ENCODE measurements at regions of chr11 and their contacts with region 1.

Region 1: DNA sequence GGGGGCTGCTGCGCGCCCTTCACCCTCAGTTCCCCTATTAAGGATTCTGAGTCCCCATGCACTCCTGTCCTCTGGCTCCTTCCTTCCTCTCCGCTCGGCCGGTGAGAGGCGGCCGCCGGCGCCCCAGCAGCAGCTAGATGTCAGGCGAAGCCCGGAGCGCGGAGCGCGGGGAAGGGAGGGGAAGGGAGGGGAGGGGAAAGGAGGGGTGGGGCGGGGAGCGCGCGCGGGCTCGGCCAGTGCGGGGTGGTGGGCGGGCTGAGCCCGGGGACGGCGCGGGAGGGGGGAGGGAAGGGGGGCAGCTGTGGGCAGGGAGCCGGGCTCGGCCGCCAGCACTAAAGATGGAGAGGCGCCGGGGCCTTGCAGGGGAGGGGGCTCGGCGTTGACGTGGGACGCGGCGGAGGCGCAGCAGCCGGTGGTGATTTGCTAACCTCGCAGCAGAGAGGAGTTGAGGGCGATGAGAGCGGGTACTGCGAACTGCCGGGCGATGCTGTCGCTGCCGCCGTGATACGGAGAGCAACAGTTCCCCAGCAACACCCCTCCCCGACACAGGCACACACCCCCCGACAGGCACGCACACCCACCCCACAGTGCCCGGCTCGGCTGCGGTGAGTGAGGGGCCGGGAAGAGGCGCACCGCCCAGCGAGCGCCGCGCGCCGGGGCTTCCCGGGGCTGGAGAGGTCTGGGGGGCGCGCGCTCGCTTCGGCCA is at the start of gene ZBTB16:
- DNase-seq: peak; percentile 34 to 84 (median 56)
- ATAC-seq: peak; percentile 73
- H3K4me3 ChIP-seq: peak within 1 kb of the TSS; percentile 67
- H3K4me3 Mint-ChIP-seq: peak within 1 kb of the TSS; percentile 95
- H3K27ac ChIP-seq: peak within 1 kb of the TSS in 1 of 2 donors; percentile 21
- H3K27ac Mint-ChIP-seq: peak within 1 kb of the TSS; percentile 64
- H3K4me1 ChIP-seq: peaks cover 33% of the 10 kb centered on the region
- H3K4me1 Mint-ChIP-seq: peaks cover 9% of the 10 kb centered on the region
- H3K27me3 ChIP-seq: peaks cover 25 to 28% of the 10 kb centered on the region in 2 experiments
- H3K27me3 Mint-ChIP-seq: peaks cover 51% of the 10 kb centered on the region
- CTCF ChIP-seq: peak; percentile 23
- total RNA-seq, gene ZBTB16: 19.1 to 20.6 TPM

Region 2: DNA sequence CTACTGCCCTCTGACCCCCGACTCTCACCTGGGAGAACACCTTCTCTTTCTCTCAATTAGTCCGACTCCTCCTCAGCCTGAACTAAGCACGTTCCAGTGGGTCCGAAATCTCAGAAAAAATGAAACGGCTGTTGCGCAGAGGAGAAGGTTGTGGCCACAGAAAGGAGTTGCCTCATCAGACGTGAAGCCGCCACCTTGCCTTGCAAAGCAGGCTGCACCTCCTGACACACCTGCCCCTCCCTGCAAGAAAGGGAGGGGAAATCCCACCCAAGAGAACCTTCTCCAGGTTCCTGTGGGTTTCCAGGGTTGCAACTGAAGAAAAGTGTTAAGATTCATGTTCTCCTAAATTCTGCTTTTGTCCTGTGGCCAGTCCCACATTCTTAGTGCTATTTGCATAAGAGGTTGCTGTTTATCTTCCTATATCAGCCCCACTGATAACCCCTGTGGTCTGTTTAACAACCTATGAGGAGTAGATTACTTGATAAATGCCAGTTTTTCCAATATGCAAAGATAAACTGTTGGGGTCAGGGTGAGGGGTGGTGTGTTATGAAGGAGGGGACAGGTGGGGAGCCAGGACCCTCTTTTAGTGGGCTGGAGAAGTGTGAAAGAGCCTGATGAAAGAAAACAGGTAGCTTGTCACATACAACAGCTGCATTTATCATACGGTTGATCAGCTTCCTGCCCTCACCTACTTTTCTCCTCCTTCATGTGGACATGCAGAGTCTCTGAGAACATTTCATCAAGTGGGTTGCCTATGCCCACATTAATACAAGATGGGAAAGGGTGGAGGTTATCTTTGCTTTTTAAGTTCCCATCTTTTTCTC is 18.3 kb after region 1 on chr11:
- CTCF ChIA-PET with region 1: no interaction called
- POLR2A ChIA-PET with region 1: interaction called, 13 read pairs
- intact Hi-C with region 1: loop called in 1 of 2 experiments (anchors 1 kb)
- DNase-seq: peak in 6 of 14 experiments; percentile 20 to 76 (median 55)
- ATAC-seq: peak; percentile 53
- H3K4me3 ChIP-seq: peak overlapping the region; percentile 29
- H3K4me3 Mint-ChIP-seq: peak overlapping the region; percentile 79
- H3K27ac ChIP-seq: peak overlapping the region; percentile 31 to 32
- H3K27ac Mint-ChIP-seq: peak overlapping the region; percentile 82
- H3K4me1 ChIP-seq: peaks cover 84% of the 10 kb centered on the region
- H3K4me1 Mint-ChIP-seq: peaks cover 72% of the 10 kb centered on the region
- H3K27me3 ChIP-seq: no peaks in the 10 kb centered on the region
- H3K27me3 Mint-ChIP-seq: peaks cover 9% of the 10 kb centered on the region
- CTCF ChIP-seq: no peak

Measured in CD4-positive, alpha-beta T cell (primary cell).